ENCODE measurements at regions of chr7 and their contacts with region 1.

Region 1: GRCh38 chr7:43582503-43583423 is at the start of gene STK17A:
- DNase-seq: peak; percentile 89 to 97 (median 95)
- ATAC-seq: peak; percentile 89 to 96 (median 90)
- H3K4me3 ChIP-seq: peak within 1 kb of the TSS; percentile 89 to 100 (median 96)
- H3K27ac ChIP-seq: peak within 1 kb of the TSS; percentile 88 to 95 (median 92)
- H3K4me1 ChIP-seq: peaks cover 0 to 25% (median 24%) of the 10 kb centered on the region in 3 donors
- H3K27me3 ChIP-seq: no peaks in the 10 kb centered on the region
- CTCF ChIP-seq: peak; percentile 93 to 98 (median 96)
- total RNA-seq, gene STK17A: 9.4 to 19.3 (median 11.7) TPM

Region 2: GRCh38 chr7:43698460-43699255 is 115.9 kb after region 1 on chr7:
- intact Hi-C with region 1: loop called in 2 of 3 experiments (anchors 5 kb)
- DNase-seq: no peak
- ATAC-seq: no peak
- H3K4me3 ChIP-seq: no peak overlapping the region
- H3K27ac ChIP-seq: no peak overlapping the region
- H3K4me1 ChIP-seq: peaks cover 0 to 7% (median 0%) of the 10 kb centered on the region in 3 donors
- H3K27me3 ChIP-seq: no peaks in the 10 kb centered on the region
- CTCF ChIP-seq: no peak

Region 3: GRCh38 chr7:43721193-43721806 is 138.5 kb after region 1 on chr7:
- intact Hi-C with region 1: loop called in 1 of 3 experiments (anchors 5 kb)
- DNase-seq: no peak
- ATAC-seq: peak; percentile 53 to 66 (median 62)
- H3K4me3 ChIP-seq: no peak overlapping the region
- H3K27ac ChIP-seq: no peak overlapping the region
- H3K4me1 ChIP-seq: peaks cover 0 to 3% (median 0%) of the 10 kb centered on the region in 3 donors
- H3K27me3 ChIP-seq: no peaks in the 10 kb centered on the region
- CTCF ChIP-seq: peak in 3 of 4 donors; percentile 37 to 64 (median 58)

Measured in pancreas (tissue), 10 donors.